ENCODE measurements at regions of chr2 and their contacts with region 1.

Region 1: DNA sequence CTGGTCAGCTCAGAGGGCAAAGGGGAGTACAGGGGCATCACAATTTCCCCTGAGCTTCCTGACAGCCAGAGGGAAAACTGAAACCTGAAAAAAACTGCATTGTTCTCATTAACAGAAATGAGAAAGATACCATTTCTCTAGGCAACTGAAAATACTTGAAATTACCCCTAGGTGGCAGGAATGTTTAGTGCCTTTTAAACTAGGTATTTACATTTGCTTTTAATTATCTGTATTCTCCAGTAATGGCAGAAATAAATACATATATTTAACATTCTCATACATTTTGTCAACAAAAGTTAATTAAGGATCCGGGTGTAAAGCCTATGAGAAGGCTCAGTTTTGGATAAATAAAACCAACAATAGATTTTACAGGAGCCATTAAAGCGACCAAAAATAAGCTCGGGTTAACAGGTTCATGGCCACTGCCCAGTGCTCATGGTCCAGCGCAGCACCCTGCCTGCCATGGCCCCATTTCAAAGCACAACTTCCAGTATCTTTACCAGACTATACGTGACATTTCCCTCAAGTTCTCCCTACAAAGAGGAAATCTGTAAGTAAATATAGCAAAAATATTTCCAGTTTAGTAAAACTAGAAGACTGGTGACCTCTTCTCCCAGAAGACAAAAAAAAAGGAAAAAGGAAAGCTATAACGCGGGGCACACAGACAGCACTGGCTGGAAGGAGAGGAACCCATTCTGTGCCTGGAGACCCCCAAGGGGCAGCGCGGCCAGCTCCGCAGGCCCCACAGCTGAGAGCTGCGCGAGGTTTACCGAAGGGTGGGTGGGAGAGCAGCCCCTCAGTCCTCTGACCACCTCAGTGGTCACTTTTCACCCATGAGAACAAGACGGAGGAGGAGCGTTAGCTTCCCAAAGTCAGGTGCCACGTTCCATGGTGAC is 34.7 kb downstream of the RPL31 start:
- DNase-seq: no peak
- ATAC-seq: peak; percentile 65
- H3K4me3 ChIP-seq: no peak overlapping the region
- H3K27ac ChIP-seq: no peak overlapping the region
- H3K4me1 ChIP-seq: no peaks in the 10 kb centered on the region; the same call in 1 of the 2 replicates
- H3K27me3 ChIP-seq: no peaks in the 10 kb centered on the region
- CTCF ChIP-seq: peak; percentile 32 to 61 (median 56); a peak in 5 of 6 replicates
- EP300 ChIP-seq: no peak
- POLR2A ChIP-seq: no peak
- RAD21 ChIP-seq: peak; percentile 81

Region 2: GRCh38 chr2:100317634-100318033 is 719.2 kb before region 1 on chr2:
- CTCF ChIA-PET with region 1: no interaction called
- POLR2A ChIA-PET with region 1: no interaction called
- RAD21 ChIA-PET with region 1: no interaction called
- SMC1A ChIA-PET with region 1: no interaction called
- in situ Hi-C with region 1: no loop called
- intact Hi-C with region 1: no loop called
- DNase-seq: no peak
- ATAC-seq: no peak
- H3K4me3 ChIP-seq: no peak overlapping the region
- H3K27ac ChIP-seq: no peak overlapping the region
- H3K4me1 ChIP-seq: no peaks in the 10 kb centered on the region
- H3K27me3 ChIP-seq: peaks cover 3 to 11% of the 10 kb centered on the region in 2 experiments; a peak in 3 of 4 replicates
- CTCF ChIP-seq: no peak
- EP300 ChIP-seq: no peak
- POLR2A ChIP-seq: no peak
- RAD21 ChIP-seq: no peak

Region 3: GRCh38 chr2:100984892-100985379 is 51.9 kb before region 1 on chr2:
- CTCF ChIA-PET with region 1: no interaction called
- POLR2A ChIA-PET with region 1: no interaction called
- RAD21 ChIA-PET with region 1: no interaction called
- SMC1A ChIA-PET with region 1: no interaction called
- in situ Hi-C with region 1: no loop called
- intact Hi-C with region 1: no loop called
- DNase-seq: no peak
- ATAC-seq: peak; percentile 93
- H3K4me3 ChIP-seq: no peak overlapping the region
- H3K27ac ChIP-seq: no peak overlapping the region
- H3K4me1 ChIP-seq: no peaks in the 10 kb centered on the region
- H3K27me3 ChIP-seq: no peaks in the 10 kb centered on the region; a peak in 1 of 4 replicates
- CTCF ChIP-seq: peak; percentile 85 to 91 (median 89)
- EP300 ChIP-seq: no peak
- POLR2A ChIP-seq: no peak
- RAD21 ChIP-seq: peak; percentile 89

Region 4: GRCh38 chr2:101047075-101047766 is 10.4 kb after region 1 on chr2:
- CTCF ChIA-PET with region 1: interaction called, 10 read pairs
- POLR2A ChIA-PET with region 1: no interaction called
- RAD21 ChIA-PET with region 1: no interaction called
- SMC1A ChIA-PET with region 1: no interaction called
- in situ Hi-C with region 1: no loop called
- intact Hi-C with region 1: no loop called
- DNase-seq: no peak
- ATAC-seq: no peak; the same call in 2 of the 3 replicates
- H3K4me3 ChIP-seq: no peak overlapping the region
- H3K27ac ChIP-seq: no peak overlapping the region
- H3K4me1 ChIP-seq: peaks cover 30% of the 10 kb centered on the region
- H3K27me3 ChIP-seq: no peaks in the 10 kb centered on the region
- CTCF ChIP-seq: no peak
- EP300 ChIP-seq: no peak
- POLR2A ChIP-seq: no peak
- RAD21 ChIP-seq: no peak

Region 5: GRCh38 chr2:101089419-101089818 is 52.6 kb after region 1 on chr2:
- CTCF ChIA-PET with region 1: no interaction called
- POLR2A ChIA-PET with region 1: no interaction called
- RAD21 ChIA-PET with region 1: no interaction called
- SMC1A ChIA-PET with region 1: no interaction called
- in situ Hi-C with region 1: no loop called
- intact Hi-C with region 1: loop called (anchors 5 kb)
- DNase-seq: peak; percentile 66
- ATAC-seq: peak; percentile 97
- H3K4me3 ChIP-seq: no peak overlapping the region
- H3K27ac ChIP-seq: peak overlapping the region; percentile 39; the same call in 1 of the 2 replicates
- H3K4me1 ChIP-seq: peaks cover 27% of the 10 kb centered on the region
- H3K27me3 ChIP-seq: no peaks in the 10 kb centered on the region
- CTCF ChIP-seq: no peak
- EP300 ChIP-seq: peak in 1 of 2 experiments; percentile 55; a peak in 2 of 4 replicates
- POLR2A ChIP-seq: no peak
- RAD21 ChIP-seq: no peak

Region 6: DNA sequence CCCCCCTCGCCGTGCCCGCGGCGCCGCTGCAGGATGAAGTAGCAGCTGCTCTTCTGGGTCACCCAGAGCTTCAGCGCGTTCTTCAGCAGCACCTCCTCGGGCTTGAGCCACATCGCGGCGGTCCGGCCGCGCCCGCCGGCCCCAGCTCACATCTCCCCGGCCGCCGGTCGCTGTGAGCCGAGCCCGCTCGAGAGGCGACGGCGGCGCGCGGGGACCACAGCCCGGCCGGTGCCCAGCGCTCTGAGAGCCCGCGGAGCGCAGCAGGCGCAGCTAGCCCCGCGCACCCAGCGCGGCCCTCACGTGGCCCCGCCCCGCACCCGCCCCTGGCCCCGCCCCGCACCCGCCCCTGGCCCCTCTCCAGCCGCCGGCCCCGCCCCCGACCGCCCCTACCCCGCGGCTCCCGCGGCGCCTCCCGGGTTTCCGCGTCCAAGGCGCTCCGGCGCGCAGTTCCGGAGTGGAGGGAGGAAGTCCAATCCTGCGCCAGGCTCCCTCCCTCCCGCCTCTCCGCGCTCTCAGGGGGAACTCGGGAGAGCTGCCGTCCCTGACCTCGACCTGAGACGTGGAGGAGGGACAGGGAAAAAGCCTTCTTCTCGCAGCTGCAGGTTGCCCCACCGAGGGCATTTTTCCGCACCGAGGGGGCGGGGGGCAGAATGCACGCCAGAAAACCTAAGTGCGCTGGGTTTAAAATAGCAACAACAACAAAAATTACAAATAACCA is 114.5 kb after region 1 on chr2 and contains the start of gene TBC1D8:
- CTCF ChIA-PET with region 1: interaction called, 46 read pairs
- POLR2A ChIA-PET with region 1: no interaction called
- RAD21 ChIA-PET with region 1: interaction called, 29 read pairs
- SMC1A ChIA-PET with region 1: interaction called, 29 read pairs
- in situ Hi-C with region 1: loop called (anchors 5 kb)
- intact Hi-C with region 1: loop called (anchors 1 kb)
- DNase-seq: no peak
- ATAC-seq: peak; percentile 84
- H3K4me3 ChIP-seq: peak within 1 kb of the TSS; percentile 61
- H3K27ac ChIP-seq: no peak within 1 kb of the TSS
- H3K4me1 ChIP-seq: peaks cover 10% of the 10 kb centered on the region
- H3K27me3 ChIP-seq: peaks cover 0 to 3% of the 10 kb centered on the region in 2 experiments; a peak in 2 of 4 replicates
- CTCF ChIP-seq: no peak
- EP300 ChIP-seq: no peak
- POLR2A ChIP-seq: peak; percentile 73
- RAD21 ChIP-seq: no peak
- polyA plus RNA-seq, gene TBC1D8: 0.80 to 1.5 TPM

Region 7: DNA sequence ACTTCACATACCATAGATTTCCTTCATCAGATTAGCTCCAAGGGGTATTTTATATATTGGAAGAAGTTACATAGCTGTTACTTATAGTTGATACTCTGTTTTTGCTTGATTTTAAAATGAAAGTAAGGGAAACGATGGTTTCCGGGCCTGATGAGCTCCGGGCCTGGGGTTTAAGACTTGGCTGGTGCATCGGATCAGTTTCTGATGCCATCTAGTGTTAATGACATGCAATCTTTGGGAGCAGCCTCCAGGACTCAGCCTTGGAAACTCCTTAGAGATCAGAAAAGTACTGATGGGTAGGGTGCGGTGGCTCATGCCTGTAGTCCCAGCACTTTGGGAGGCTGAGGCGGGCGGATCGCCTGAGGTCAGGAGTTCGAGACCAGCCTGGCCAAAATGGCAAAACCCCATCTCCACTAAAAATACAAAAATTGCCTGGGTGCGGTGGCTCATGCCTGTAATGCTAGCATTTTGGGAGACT is 168.8 kb after region 1 on chr2:
- CTCF ChIA-PET with region 1: interaction called, 18 read pairs
- POLR2A ChIA-PET with region 1: no interaction called
- RAD21 ChIA-PET with region 1: interaction called, 3 read pairs
- SMC1A ChIA-PET with region 1: interaction called, 16 read pairs
- in situ Hi-C with region 1: no loop called
- intact Hi-C with region 1: loop called (anchors 5 kb)
- DNase-seq: no peak
- ATAC-seq: peak; percentile 71
- H3K4me3 ChIP-seq: no peak overlapping the region; the same call in 1 of the 2 replicates
- H3K27ac ChIP-seq: no peak overlapping the region
- H3K4me1 ChIP-seq: no peaks in the 10 kb centered on the region
- H3K27me3 ChIP-seq: no peaks in the 10 kb centered on the region; a peak in 1 of 4 replicates
- CTCF ChIP-seq: peak; percentile 30 to 52 (median 38); a peak in 4 of 6 replicates
- EP300 ChIP-seq: no peak
- POLR2A ChIP-seq: no peak
- RAD21 ChIP-seq: peak; percentile 44

Region 8: GRCh38 chr2:101679037-101679726 is 642.4 kb after region 1 on chr2:
- CTCF ChIA-PET with region 1: no interaction called
- POLR2A ChIA-PET with region 1: no interaction called
- RAD21 ChIA-PET with region 1: no interaction called
- SMC1A ChIA-PET with region 1: no interaction called
- in situ Hi-C with region 1: no loop called
- intact Hi-C with region 1: no loop called
- DNase-seq: no peak
- ATAC-seq: no peak
- H3K4me3 ChIP-seq: no peak overlapping the region
- H3K27ac ChIP-seq: no peak overlapping the region
- H3K4me1 ChIP-seq: no peaks in the 10 kb centered on the region
- H3K27me3 ChIP-seq: no peaks in the 10 kb centered on the region; a peak in 1 of 4 replicates
- CTCF ChIP-seq: no peak
- EP300 ChIP-seq: no peak
- POLR2A ChIP-seq: no peak
- RAD21 ChIP-seq: no peak